Caco-2 (cell line): ENCODE measurements at regions of chr5 and their contacts with region 1.

Region 1: GRCh38 chr5:84255315-84255714 is 129.4 kb downstream of the EDIL3 start:
- DNase-seq: peak in 1 of 2 experiments; percentile 11
- H3K4me3 ChIP-seq: no peak overlapping the region
- H3K4me3 Mint-ChIP-seq: no peak overlapping the region
- H3K27ac Mint-ChIP-seq: no peak overlapping the region
- H3K4me1 ChIP-seq: no peaks in the 10 kb centered on the region
- H3K4me1 Mint-ChIP-seq: no peaks in the 10 kb centered on the region
- H3K27me3 ChIP-seq: no peaks in the 10 kb centered on the region
- H3K27me3 Mint-ChIP-seq: no peaks in the 10 kb centered on the region
- CTCF ChIP-seq: peak; percentile 18 to 39

Region 2: DNA sequence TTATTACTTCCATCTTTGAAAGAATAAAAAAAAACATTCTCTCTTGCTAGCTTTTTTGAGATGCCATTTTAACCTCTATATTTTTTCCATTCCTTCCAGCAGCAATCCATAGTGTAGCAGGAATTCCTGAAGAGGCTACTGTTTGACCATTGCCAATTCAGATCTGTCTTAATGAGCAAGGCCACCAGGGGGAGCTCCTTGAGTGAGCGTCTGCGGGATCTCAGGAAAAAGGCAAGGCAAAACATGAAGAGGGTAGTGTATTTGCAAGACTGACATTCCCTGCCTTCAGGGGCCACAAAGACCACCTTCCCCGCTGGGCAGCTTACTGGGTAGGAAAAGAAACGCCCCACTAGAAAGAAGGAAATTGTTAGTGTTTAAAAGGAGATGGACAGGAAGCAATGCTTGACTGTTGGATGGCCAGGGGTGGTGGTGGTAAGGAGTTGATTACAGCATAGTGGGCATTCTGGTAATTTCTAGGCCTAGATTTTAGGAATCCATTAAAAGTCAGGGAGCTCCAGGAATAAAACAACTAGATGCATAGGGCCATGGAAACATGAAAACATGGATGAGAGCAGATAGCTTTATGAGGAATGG is 328.1 kb before region 1 on chr5:
- CTCF ChIA-PET with region 1: no interaction called
- POLR2A ChIA-PET with region 1: no interaction called
- intact Hi-C with region 1: loop called (anchors 2 kb)
- DNase-seq: peak; percentile 70 to 80
- H3K4me3 ChIP-seq: no peak overlapping the region
- H3K4me3 Mint-ChIP-seq: no peak overlapping the region
- H3K27ac Mint-ChIP-seq: no peak overlapping the region
- H3K4me1 ChIP-seq: 0 out of 2 replicates have a peak, but pooled peaks cover 13% of the 10 kb centered on the region
- H3K4me1 Mint-ChIP-seq: peaks cover 13% of the 10 kb centered on the region
- H3K27me3 ChIP-seq: no peaks in the 10 kb centered on the region
- H3K27me3 Mint-ChIP-seq: no peaks in the 10 kb centered on the region
- CTCF ChIP-seq: peak; percentile 71 to 73

Region 3: DNA sequence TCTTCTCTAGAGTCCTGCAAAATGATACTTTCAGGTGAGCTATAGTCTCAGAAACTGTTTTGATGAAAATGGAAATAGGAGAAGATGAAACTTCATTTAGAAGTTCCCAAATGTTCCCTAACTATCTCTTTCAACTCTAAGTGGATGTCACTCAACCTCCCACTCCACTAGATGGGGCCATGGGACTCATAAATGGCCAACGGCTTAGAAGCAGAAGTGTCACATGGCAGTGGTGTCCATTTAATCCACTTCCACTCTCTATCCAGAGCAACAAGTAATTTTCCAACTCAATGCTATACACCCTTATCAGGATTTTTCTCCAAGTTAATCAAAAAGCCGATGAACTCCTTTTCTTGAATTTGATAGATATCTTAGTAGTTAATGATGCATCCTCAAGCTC is 166.3 kb before region 1 on chr5:
- CTCF ChIA-PET with region 1: interaction called, 4 read pairs
- POLR2A ChIA-PET with region 1: no interaction called
- intact Hi-C with region 1: loop called (anchors 1 kb)
- DNase-seq: peak in 1 of 2 experiments; percentile 19
- H3K4me3 ChIP-seq: no peak overlapping the region
- H3K4me3 Mint-ChIP-seq: no peak overlapping the region
- H3K27ac Mint-ChIP-seq: no peak overlapping the region
- H3K4me1 ChIP-seq: peaks cover 8% of the 10 kb centered on the region; the same call in 1 of the 2 replicates
- H3K4me1 Mint-ChIP-seq: peaks cover 9% of the 10 kb centered on the region
- H3K27me3 ChIP-seq: no peaks in the 10 kb centered on the region; the same call in 1 of the 2 replicates
- H3K27me3 Mint-ChIP-seq: peaks cover 10% of the 10 kb centered on the region
- CTCF ChIP-seq: peak; percentile 25 to 30